Activated CD4-positive, alpha-beta memory T cell treated with anti-CD3 and anti-CD28 coated beads for 36 hours (primary cell): ENCODE measurements at regions of chr6 and their contacts with region 1.

Region 1: DNA sequence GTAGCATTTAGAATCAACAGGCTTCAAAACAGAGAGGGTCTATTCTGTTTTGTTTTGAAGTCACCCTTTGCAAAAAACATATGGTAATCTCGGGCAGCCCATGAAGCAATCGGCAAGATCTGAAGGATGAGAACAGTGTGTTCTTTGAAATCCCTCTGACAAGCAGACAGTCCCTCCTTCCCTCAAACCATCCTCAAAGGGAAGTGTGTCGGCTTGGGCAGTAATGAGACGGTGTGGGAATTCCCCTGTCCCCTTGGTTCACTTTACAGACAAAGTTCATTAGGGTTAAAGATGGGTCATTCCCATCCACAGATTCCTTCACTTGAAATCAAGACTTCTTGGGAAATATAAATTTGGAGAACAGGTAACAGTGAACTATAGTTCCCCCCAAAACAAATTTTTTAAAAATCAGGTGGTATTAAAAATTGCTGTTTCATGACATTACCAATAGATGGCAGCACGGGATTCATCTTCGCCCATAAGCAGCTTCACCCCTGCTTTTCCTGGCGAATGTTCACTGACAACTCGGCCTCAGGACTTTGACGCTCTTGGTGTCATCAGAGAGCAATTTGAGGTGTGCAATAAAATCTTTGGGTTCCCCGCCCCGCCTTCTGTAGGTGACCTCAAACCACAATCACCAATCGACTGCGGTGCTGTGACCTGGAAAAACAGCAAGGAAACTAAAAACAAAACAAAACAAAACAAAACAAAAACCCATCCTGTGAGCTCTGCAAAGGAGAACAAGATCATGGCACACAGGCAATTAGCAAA is 159.3 kb upstream of the TNFAIP3 start:
- DNase-seq: peak; percentile 90
- H3K4me3 Mint-ChIP-seq: peak overlapping the region; percentile 67
- H3K27ac Mint-ChIP-seq: peak overlapping the region; percentile 88
- H3K4me1 Mint-ChIP-seq: peaks cover 75% of the 10 kb centered on the region
- H3K27me3 Mint-ChIP-seq: no peaks in the 10 kb centered on the region

Region 2: GRCh38 chr6:136410201-136411027 is 1297.4 kb before region 1 on chr6:
- CTCF ChIA-PET with region 1: no interaction called
- POLR2A ChIA-PET with region 1: no interaction called
- intact Hi-C with region 1: no loop called
- DNase-seq: no peak
- H3K4me3 Mint-ChIP-seq: no peak overlapping the region
- H3K27ac Mint-ChIP-seq: no peak overlapping the region
- H3K4me1 Mint-ChIP-seq: peaks cover 3% of the 10 kb centered on the region
- H3K27me3 Mint-ChIP-seq: peaks cover 2% of the 10 kb centered on the region

Region 3: GRCh38 chr6:137661601-137662000 is 46.2 kb before region 1 on chr6:
- CTCF ChIA-PET with region 1: interaction called, 10 read pairs
- POLR2A ChIA-PET with region 1: interaction called, 4 read pairs
- intact Hi-C with region 1: loop called (anchors 2 kb)
- DNase-seq: peak; percentile 58
- H3K4me3 Mint-ChIP-seq: no peak overlapping the region
- H3K27ac Mint-ChIP-seq: no peak overlapping the region
- H3K4me1 Mint-ChIP-seq: peaks cover 24% of the 10 kb centered on the region
- H3K27me3 Mint-ChIP-seq: peaks cover 8% of the 10 kb centered on the region

Region 4: GRCh38 chr6:137791281-137792159 is 83.7 kb after region 1 on chr6:
- CTCF ChIA-PET with region 1: interaction called, 6 read pairs
- POLR2A ChIA-PET with region 1: no interaction called
- intact Hi-C with region 1: loop called (anchors 1 kb)
- DNase-seq: no peak
- H3K4me3 Mint-ChIP-seq: peak overlapping the region; percentile 62
- H3K27ac Mint-ChIP-seq: peak overlapping the region; percentile 59
- H3K4me1 Mint-ChIP-seq: peaks cover 53% of the 10 kb centered on the region
- H3K27me3 Mint-ChIP-seq: no peaks in the 10 kb centered on the region

Region 5: DNA sequence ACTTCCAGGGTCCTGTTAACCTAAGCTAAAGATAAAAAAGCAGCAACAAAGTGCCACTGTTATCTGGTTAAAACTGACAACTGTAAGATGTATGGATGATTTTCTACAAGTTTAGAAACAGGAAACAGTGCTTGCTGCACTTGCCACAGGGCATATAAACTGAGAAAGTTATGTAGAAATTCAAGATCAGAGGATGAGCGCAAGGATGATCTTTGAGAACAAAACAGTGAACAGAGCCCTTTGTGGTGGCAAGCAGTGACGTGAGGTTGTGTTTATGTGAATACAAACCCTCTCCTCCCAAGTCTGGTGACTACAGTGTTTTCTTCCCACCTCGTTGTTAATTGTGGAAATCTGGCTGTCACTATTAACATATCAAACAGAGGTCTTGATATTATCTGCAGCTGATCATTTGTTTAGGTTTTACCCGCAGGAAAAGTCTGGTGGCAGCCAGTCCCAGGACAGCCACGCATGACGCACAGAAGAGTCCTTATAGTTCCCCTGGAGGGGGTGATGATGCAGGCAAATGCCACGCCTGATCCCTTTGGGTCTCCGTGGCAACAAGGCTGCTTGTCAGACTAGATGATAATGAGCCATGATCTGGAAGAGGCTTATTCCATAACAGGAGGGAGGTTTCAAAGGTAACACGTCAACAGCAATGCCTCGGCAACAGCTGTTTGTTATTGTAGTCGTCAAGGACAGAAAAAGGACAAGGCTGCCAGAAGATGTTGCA is 116.2 kb after region 1 on chr6:
- CTCF ChIA-PET with region 1: no interaction called
- POLR2A ChIA-PET with region 1: no interaction called
- intact Hi-C with region 1: loop called (anchors 1 kb)
- DNase-seq: peak; percentile 83
- H3K4me3 Mint-ChIP-seq: peak overlapping the region; percentile 70
- H3K27ac Mint-ChIP-seq: peak overlapping the region; percentile 96
- H3K4me1 Mint-ChIP-seq: peaks cover 83% of the 10 kb centered on the region
- H3K27me3 Mint-ChIP-seq: no peaks in the 10 kb centered on the region

Region 6: GRCh38 chr6:137873273-137873762 is 165.5 kb after region 1 on chr6:
- CTCF ChIA-PET with region 1: interaction called, 70 read pairs
- POLR2A ChIA-PET with region 1: interaction called, 43 read pairs
- intact Hi-C with region 1: loop called (anchors 1 kb)
- DNase-seq: peak; percentile 92
- H3K4me3 Mint-ChIP-seq: peak overlapping the region; percentile 91
- H3K27ac Mint-ChIP-seq: peak overlapping the region; percentile 93
- H3K4me1 Mint-ChIP-seq: peaks cover 46% of the 10 kb centered on the region
- H3K27me3 Mint-ChIP-seq: no peaks in the 10 kb centered on the region

Region 7: GRCh38 chr6:137927777-137928218 is 220.0 kb after region 1 on chr6:
- CTCF ChIA-PET with region 1: no interaction called
- POLR2A ChIA-PET with region 1: no interaction called
- intact Hi-C with region 1: loop called (anchors 5 kb)
- DNase-seq: peak; percentile 88
- H3K4me3 Mint-ChIP-seq: peak overlapping the region; percentile 65
- H3K27ac Mint-ChIP-seq: peak overlapping the region; percentile 90
- H3K4me1 Mint-ChIP-seq: peaks cover 46% of the 10 kb centered on the region
- H3K27me3 Mint-ChIP-seq: no peaks in the 10 kb centered on the region

Region 8: GRCh38 chr6:138001750-138002349 is 294.1 kb after region 1 on chr6:
- CTCF ChIA-PET with region 1: interaction called, 58 read pairs
- POLR2A ChIA-PET with region 1: no interaction called
- intact Hi-C with region 1: loop called (anchors 1 kb)
- DNase-seq: peak; percentile 76
- H3K4me3 Mint-ChIP-seq: no peak overlapping the region
- H3K27ac Mint-ChIP-seq: no peak overlapping the region
- H3K4me1 Mint-ChIP-seq: peaks cover 14% of the 10 kb centered on the region
- H3K27me3 Mint-ChIP-seq: peaks cover 3% of the 10 kb centered on the region